ENCODE measurements at regions of chr3 and their contacts with region 1.

Region 1: GRCh38 chr3:61890167-61890566 is 328.8 kb downstream of the PTPRG start:
- DNase-seq: no peak
- H3K4me3 ChIP-seq: no peak overlapping the region
- H3K27ac ChIP-seq: no peak overlapping the region
- H3K27me3 ChIP-seq: no peaks in the 10 kb centered on the region
- CTCF ChIP-seq: no peak

Region 2: DNA sequence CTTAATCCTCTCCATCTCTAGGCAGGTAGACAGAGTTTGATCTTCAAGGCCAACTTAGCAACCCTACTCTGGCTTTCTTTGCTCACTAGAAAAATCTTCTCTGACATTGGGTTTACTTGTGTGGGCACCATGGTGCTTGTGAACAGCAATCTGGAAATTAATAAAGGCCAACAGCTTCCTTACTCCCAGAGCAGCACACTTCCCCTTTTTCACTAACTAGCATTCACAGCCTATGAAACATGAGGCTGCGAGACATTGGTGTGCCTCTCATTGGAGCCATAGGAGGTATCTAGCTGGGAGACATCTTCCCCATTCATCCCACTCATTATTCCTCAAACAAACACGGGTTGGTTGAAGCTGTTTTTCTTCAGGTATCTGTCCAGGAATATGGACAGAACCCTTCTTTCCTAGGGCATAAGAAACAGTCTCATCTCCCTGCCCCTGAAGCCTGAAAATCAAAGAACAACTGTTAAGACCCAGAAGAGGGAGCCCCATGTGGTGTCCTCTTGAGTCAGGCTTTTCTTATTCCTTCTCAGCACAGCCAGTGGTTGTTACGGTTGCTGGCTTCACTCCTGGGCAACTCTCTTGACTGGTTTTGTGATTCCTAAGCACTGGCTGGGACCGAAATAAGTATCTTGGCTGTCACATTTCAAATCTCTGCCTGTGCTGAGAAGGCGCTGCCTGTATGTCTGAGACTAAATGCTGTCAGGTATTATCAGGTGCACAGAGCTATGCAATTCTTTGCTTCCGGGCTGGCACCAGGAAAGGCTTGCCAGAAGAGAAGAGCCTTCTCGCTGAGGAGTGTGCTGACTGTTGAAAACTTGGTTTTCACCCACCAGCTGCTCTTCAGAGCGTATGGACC is 288.8 kb after region 1 on chr3:
- CTCF ChIA-PET with region 1: no interaction called
- POLR2A ChIA-PET with region 1: interaction called, 10 read pairs
- DNase-seq: no peak
- H3K4me3 ChIP-seq: no peak overlapping the region
- H3K27ac ChIP-seq: no peak overlapping the region
- H3K27me3 ChIP-seq: no peaks in the 10 kb centered on the region
- CTCF ChIP-seq: no peak

Measured in AG04450 (cell line).